ENCODE measurements at regions of chr15 and their contacts with region 1.

Region 1: GRCh38 chr15:41022487-41023090 is 69.3 kb downstream of the CHAC1 start:
- DNase-seq: peak; percentile 80
- H3K4me3 ChIP-seq: no peak overlapping the region
- H3K27ac ChIP-seq: no peak overlapping the region
- H3K4me1 ChIP-seq: peaks cover 32% of the 10 kb centered on the region
- H3K27me3 ChIP-seq: no peaks in the 10 kb centered on the region
- CTCF ChIP-seq: peak; percentile 67 to 73
- POLR2A ChIP-seq: no peak

Region 2: GRCh38 chr15:40928821-40929659 is 93.5 kb before region 1 on chr15 and contains the start of gene DLL4:
- CTCF ChIA-PET with region 1: interaction called, 120 read pairs
- POLR2A ChIA-PET with region 1: interaction called, 26 read pairs
- dilution Hi-C with region 1: no loop called
- intact Hi-C with region 1: loop called (anchors 1 kb)
- DNase-seq: peak; percentile 94
- H3K4me3 ChIP-seq: peak within 1 kb of the TSS; percentile 0 to 89 (median 56)
- H3K27ac ChIP-seq: no peak within 1 kb of the TSS
- H3K4me1 ChIP-seq: peaks cover 25% of the 10 kb centered on the region
- H3K27me3 ChIP-seq: peaks cover 14 to 21% of the 10 kb centered on the region in 2 experiments
- CTCF ChIP-seq: peak in 1 of 2 donors; percentile 7
- POLR2A ChIP-seq: peak; percentile 99
- total RNA-seq, gene DLL4: 55.2 and 75.8 TPM in 2 replicates

Region 3: DNA sequence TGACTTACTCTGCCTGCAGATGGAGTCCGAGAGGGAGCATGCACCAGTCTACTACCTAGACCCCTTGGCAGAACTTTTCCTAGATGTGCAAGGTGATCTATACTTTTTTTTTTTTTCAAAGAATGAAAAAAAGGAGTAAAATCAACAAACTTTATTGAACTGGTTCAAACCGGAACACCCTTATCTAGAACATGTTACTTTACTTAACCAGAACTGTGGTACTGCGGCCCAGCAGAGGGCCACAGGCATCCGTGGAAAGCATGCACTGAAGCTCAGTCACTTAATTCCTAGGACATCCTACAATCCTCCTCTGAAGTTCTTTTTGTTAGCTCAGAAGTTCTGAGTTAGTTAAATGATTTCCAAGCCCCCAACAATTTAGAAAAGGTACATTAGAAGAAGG is 47.7 kb before region 1 on chr15:
- CTCF ChIA-PET with region 1: interaction called, 31 read pairs
- POLR2A ChIA-PET with region 1: no interaction called
- dilution Hi-C with region 1: no loop called
- intact Hi-C with region 1: no loop called
- DNase-seq: no peak
- H3K4me3 ChIP-seq: no peak overlapping the region
- H3K27ac ChIP-seq: no peak overlapping the region
- H3K4me1 ChIP-seq: no peaks in the 10 kb centered on the region
- H3K27me3 ChIP-seq: no peaks in the 10 kb centered on the region
- CTCF ChIP-seq: no peak
- POLR2A ChIP-seq: no peak

Region 4: GRCh38 chr15:41011055-41011815 is 11.4 kb before region 1 on chr15:
- CTCF ChIA-PET with region 1: interaction called, 12 read pairs
- POLR2A ChIA-PET with region 1: no interaction called
- dilution Hi-C with region 1: no loop called
- intact Hi-C with region 1: no loop called
- DNase-seq: peak; percentile 51
- H3K4me3 ChIP-seq: no peak overlapping the region
- H3K27ac ChIP-seq: no peak overlapping the region
- H3K4me1 ChIP-seq: peaks cover 14% of the 10 kb centered on the region
- H3K27me3 ChIP-seq: no peaks in the 10 kb centered on the region
- CTCF ChIP-seq: no peak
- POLR2A ChIP-seq: no peak

Region 5: DNA sequence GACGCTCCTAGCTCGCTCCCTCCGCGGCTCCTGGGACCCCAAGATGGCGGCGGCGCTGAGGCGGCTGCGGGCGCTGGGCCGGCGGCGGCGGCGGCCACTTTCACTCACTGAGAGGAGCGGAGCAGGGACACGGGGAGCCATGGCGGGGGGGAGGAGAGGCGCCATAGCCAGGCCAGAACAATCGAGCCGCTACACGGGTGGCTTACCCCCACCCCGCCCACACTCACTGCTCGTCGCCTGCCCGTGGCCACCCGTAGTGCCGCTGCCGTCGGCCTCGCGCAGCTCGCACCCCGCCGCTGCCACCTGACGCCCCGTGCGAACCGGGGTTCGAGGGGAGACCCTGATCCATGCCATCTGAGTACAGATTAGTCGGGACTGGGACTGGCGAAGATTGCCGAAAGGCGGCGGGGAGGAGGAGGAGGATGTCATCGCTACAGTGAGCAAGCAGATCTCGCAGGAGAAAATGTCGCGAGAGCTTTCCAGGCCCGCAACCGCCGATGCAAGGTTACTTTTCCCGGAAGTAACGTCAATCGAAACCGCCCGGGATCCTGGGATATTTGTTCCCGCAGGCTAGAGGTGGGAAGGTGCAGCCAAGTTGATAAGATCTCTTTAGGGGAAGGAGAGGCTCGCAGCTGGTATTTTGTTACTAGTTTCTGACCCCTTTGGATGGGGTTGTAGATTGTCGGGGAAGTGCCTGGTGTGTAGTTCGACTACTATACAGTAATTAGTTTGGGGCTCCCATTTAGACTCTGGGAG is 93.7 kb after region 1 on chr15 and contains the start of gene INO80:
- CTCF ChIA-PET with region 1: no interaction called
- POLR2A ChIA-PET with region 1: no interaction called
- dilution Hi-C with region 1: no loop called
- intact Hi-C with region 1: no loop called
- DNase-seq: peak; percentile 97
- H3K4me3 ChIP-seq: peak within 1 kb of the TSS; percentile 89 to 95 (median 90)
- H3K27ac ChIP-seq: peak within 1 kb of the TSS; percentile 96
- H3K4me1 ChIP-seq: peaks cover 11% of the 10 kb centered on the region
- H3K27me3 ChIP-seq: peaks cover 0 to 3% of the 10 kb centered on the region in 2 experiments
- CTCF ChIP-seq: no peak
- POLR2A ChIP-seq: peak; percentile 97
- total RNA-seq, gene INO80: 22.9 and 29.1 TPM in 2 replicates